Ascending aorta (tissue), 2 donors: ENCODE measurements at regions of chr19 and their contacts with region 1.

Region 1: DNA sequence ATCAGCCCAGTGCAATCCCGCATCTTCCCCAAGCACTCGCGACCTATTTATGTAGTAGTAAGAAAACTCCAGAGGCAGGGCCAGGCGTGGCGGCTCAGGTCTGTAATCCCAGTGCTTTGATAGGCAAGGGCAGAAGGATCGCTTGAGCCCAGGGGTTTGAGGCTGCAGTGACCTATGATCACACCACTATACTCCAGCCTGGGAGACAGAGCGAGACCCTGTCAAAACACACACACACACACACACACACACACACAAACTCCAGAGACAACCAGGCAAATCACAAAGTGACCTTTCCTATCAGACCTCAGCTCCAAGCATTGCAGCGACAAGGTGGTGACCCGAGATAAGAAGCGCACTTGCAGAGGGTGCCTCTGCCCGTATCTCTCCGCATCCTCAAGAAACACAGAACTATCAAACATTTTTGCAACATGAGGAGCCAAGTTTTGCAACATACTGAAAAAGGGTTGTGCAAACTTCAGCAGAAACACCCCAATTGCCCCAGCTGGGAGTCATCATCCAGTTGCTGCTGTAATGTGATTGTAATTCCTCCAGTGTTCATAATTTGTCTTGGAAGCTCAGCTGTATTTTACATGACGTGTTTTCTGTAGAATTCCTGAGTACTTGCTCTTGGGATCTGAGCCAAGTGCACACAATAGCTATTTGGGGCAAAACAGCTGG is 8.7 kb upstream of the KLF2 start:
- DNase-seq: peak in 1 of 2 donors; percentile 90
- H3K4me3 ChIP-seq: no peak overlapping the region
- H3K27ac ChIP-seq: peak overlapping the region; percentile 80 to 83
- H3K4me1 ChIP-seq: peaks cover 0 to 33% of the 10 kb centered on the region in 2 donors
- H3K27me3 ChIP-seq: no peaks in the 10 kb centered on the region
- CTCF ChIP-seq: no peak

Region 2: DNA sequence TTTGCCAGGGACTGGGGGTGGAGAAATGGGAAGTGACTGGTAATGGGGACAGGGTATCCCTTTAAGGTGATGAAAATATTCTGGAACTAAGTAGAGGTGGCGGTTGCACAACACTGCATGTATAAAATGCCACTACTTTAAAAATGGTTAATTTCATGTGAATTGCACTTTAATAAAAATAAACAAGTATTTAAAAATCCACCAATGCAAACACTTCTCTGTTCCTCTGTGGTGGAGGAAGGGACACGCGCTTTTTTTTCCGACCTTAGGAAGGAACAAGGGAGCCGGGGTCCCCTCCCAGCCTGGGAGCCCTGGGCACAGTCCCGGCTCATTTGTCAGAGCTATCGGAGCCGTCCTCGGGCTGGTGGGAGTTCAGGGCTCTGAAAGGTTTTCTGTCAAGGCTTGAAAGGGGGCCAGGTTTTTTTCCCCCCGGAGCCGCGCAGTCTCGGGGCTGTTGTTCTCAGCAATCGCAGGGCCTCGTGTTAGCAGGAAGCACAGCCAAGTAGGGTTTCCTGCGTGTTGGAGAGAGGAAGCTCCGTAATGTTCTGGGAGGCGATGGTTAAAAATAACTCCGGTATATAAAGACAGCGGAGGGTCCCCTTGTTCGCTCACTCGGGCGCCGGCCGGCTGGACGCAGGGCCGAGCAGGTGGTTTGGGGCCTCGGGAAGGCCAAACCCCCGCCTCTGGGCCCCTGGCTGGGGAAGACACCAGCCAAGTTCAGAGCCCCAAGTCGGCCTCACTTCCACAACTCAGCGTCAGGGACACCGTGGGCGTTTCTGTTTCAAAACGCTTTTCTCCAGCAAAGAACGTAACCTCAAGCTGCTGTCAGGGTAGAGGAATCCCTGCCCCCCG is 32.5 kb before region 1 on chr19:
- intact Hi-C with region 1: loop called (anchors 2 kb)
- DNase-seq: peak; percentile 80 to 93
- H3K4me3 ChIP-seq: peak overlapping the region; percentile 29 to 57
- H3K27ac ChIP-seq: peak overlapping the region; percentile 95
- H3K4me1 ChIP-seq: peaks cover 23 to 63% of the 10 kb centered on the region in 2 donors
- H3K27me3 ChIP-seq: no peaks in the 10 kb centered on the region
- CTCF ChIP-seq: no peak

Region 3: DNA sequence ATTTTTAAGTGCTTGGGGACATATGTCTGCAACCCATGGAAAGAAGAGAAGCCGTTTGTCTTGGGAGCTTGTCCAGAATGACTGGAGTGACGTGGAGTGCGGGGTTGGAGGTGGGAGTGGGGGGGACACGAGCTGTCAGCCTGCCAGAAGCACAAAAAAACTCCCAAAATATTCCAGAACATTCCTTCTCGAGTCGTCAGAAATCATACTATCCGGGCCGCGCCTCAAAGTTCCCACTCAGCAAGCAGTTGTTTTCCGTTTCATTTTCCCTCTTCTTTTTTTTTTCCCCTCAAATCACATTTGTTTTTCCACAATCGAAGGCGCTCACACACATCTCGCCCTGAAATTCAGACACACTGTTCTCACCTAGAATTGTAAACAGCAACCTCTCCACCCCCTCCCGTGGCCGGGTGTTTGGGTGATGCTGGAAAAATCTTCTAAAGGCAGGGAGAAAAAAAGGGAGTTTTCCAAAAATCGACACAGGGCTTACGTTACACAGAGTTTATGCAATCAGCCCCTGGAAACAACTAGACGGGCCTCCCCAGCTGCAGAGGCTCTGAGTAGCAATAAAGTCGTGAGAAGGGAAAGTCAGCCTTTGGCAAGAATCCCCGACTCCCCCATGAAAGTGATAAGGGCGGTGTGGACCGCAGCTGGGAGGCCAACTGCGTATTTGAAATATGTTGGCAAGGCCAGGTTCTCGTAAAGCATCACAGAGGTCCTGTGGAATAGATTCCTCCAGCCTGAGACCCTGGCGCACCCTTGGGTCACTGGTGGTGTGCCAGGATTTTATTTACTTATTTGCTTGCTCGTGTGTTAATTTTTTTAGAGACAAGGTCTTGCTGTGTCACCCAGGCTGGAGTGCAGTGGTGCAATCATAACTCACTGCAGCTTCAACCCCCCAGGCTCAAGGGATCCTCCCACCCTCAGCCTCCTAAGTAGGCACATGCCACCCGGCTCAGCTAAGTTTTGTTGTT is 22.6 kb before region 1 on chr19:
- intact Hi-C with region 1: loop called (anchors 1 kb)
- DNase-seq: peak; percentile 39 to 93
- H3K4me3 ChIP-seq: peak overlapping the region; percentile 24 to 45
- H3K27ac ChIP-seq: peak overlapping the region; percentile 92 to 97
- H3K4me1 ChIP-seq: peaks cover 8 to 15% of the 10 kb centered on the region in 2 donors
- H3K27me3 ChIP-seq: no peaks in the 10 kb centered on the region
- CTCF ChIP-seq: no peak